ENCODE measurements at regions of chr12 and their contacts with region 1.

Region 1: GRCh38 chr12:93979189-93979588 is 169.2 kb upstream of the PLXNC1 start:
- DNase-seq: no peak
- ATAC-seq: no peak
- H3K4me3 Mint-ChIP-seq: no peak overlapping the region
- H3K27ac Mint-ChIP-seq: no peak overlapping the region
- H3K4me1 Mint-ChIP-seq: no peaks in the 10 kb centered on the region
- H3K27me3 Mint-ChIP-seq: peaks cover 6% of the 10 kb centered on the region
- CTCF ChIP-seq: no peak

Region 2: GRCh38 chr12:92784795-92785562 is 1194.2 kb before region 1 on chr12:
- CTCF ChIA-PET with region 1: no interaction called
- POLR2A ChIA-PET with region 1: no interaction called
- intact Hi-C with region 1: loop called (anchors 10 kb)
- DNase-seq: no peak
- ATAC-seq: peak; percentile 98
- H3K4me3 Mint-ChIP-seq: no peak overlapping the region
- H3K27ac Mint-ChIP-seq: no peak overlapping the region
- H3K4me1 Mint-ChIP-seq: no peaks in the 10 kb centered on the region
- H3K27me3 Mint-ChIP-seq: no peaks in the 10 kb centered on the region
- CTCF ChIP-seq: no peak

Region 3: GRCh38 chr12:93766796-93767523 is 212.2 kb before region 1 on chr12:
- CTCF ChIA-PET with region 1: no interaction called
- POLR2A ChIA-PET with region 1: no interaction called
- intact Hi-C with region 1: loop called (anchors 1 kb)
- DNase-seq: no peak
- ATAC-seq: no peak
- H3K4me3 Mint-ChIP-seq: no peak overlapping the region
- H3K27ac Mint-ChIP-seq: no peak overlapping the region
- H3K4me1 Mint-ChIP-seq: peaks cover 18% of the 10 kb centered on the region
- H3K27me3 Mint-ChIP-seq: no peaks in the 10 kb centered on the region
- CTCF ChIP-seq: no peak

Measured in activated B cell treated with CpG ODN at 0.5 μM for 24 hours (primary cell).